ENCODE measurements at regions of chr1 and their contacts with region 1.

Region 1: GRCh38 chr1:153566440-153567379 is 1.1 kb upstream of the S100A2 start:
- DNase-seq: peak; percentile 96
- ATAC-seq: peak; percentile 79
- H3K4me3 ChIP-seq: peak overlapping the region; percentile 23 to 41
- H3K27ac ChIP-seq: peak overlapping the region; percentile 100
- H3K4me1 ChIP-seq: peaks cover 62 to 81% of the 10 kb centered on the region in 2 experiments
- H3K27me3 ChIP-seq: no peaks in the 10 kb centered on the region
- CTCF ChIP-seq: no peak
- POLR2A ChIP-seq: peak; percentile 48
- RAD21 ChIP-seq: no peak

Region 2: DNA sequence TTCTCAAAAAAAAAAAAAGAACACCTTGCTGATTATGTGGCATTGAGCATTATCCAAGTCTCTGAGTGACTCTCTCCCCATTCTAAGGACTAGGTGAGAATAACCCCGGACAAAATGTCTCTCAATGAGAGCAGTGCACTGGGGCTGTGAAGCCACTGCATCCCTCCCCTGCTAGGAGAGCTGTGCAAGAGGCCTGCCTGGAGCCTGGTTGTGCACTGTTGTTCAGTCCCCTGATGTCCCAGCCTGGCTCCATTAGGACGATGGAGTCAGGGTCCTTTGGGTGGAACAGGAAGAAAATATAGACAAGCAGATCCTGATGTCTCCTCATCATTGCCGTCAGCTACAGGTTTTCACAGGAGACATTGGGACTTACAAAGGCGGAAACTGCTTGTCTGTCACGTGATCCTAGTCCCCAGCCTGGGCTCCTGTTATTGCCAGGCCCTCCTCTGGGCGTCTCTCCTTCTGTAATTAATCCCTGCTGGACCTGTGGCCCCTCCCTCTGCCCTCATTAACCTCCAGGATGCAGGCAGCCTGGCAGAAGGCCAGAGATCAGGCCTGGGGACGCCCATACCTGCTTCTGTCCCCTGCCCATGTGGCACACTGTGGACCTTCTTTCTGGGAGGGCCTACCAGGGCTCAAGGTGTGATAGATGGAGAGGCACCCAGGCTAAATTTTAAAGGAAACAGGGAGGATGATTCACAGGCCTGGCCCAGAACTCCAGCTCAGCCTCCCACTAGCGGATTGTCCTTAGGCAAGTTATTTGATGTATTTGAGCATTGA is 28.5 kb before region 1 on chr1:
- CTCF ChIA-PET with region 1: interaction called, 35 read pairs
- POLR2A ChIA-PET with region 1: interaction called, 114 read pairs
- RAD21 ChIA-PET with region 1: interaction called, 5 to 11 read pairs
- intact Hi-C with region 1: loop called (anchors 1 kb)
- DNase-seq: no peak
- ATAC-seq: peak; percentile 30
- H3K4me3 ChIP-seq: no peak overlapping the region
- H3K27ac ChIP-seq: peak overlapping the region; percentile 94
- H3K4me1 ChIP-seq: peaks cover 77 to 92% of the 10 kb centered on the region in 2 experiments
- H3K27me3 ChIP-seq: no peaks in the 10 kb centered on the region
- CTCF ChIP-seq: peak in 1 of 3 experiments; percentile 20; a peak in 1 of 6 replicates
- POLR2A ChIP-seq: no peak
- RAD21 ChIP-seq: no peak

Region 3: GRCh38 chr1:153545067-153546055 is 21.3 kb before region 1 on chr1 and contains the start of gene S100A4:
- CTCF ChIA-PET with region 1: interaction called, 9 read pairs
- POLR2A ChIA-PET with region 1: interaction called, 33 read pairs
- RAD21 ChIA-PET with region 1: interaction called, 4 to 7 read pairs
- intact Hi-C with region 1: loop called (anchors 1 kb)
- DNase-seq: peak; percentile 87
- ATAC-seq: peak; percentile 71
- H3K4me3 ChIP-seq: peak within 1 kb of the TSS; percentile 50 to 54
- H3K27ac ChIP-seq: peak within 1 kb of the TSS; percentile 97
- H3K4me1 ChIP-seq: peaks cover 96 to 100% of the 10 kb centered on the region in 2 experiments
- H3K27me3 ChIP-seq: no peaks in the 10 kb centered on the region
- CTCF ChIP-seq: no peak
- POLR2A ChIP-seq: peak; percentile 60
- RAD21 ChIP-seq: no peak
- total RNA-seq, gene S100A4: 384 TPM

Region 4: GRCh38 chr1:154157520-154158306 is 591.0 kb after region 1 on chr1:
- CTCF ChIA-PET with region 1: no interaction called
- POLR2A ChIA-PET with region 1: no interaction called
- RAD21 ChIA-PET with region 1: no interaction called
- intact Hi-C with region 1: no loop called
- DNase-seq: no peak
- ATAC-seq: no peak
- H3K4me3 ChIP-seq: no peak overlapping the region
- H3K27ac ChIP-seq: no peak overlapping the region
- H3K4me1 ChIP-seq: no peaks in the 10 kb centered on the region
- H3K27me3 ChIP-seq: no peaks in the 10 kb centered on the region
- CTCF ChIP-seq: no peak
- POLR2A ChIP-seq: no peak
- RAD21 ChIP-seq: no peak